ENCODE measurements at regions of chr1 and their contacts with region 1.

Region 1: GRCh38 chr1:231421993-231422764 is at the start of gene EGLN1:
- DNase-seq: peak; percentile 86 to 89
- ATAC-seq: peak; percentile 83 to 97 (median 90)
- H3K4me3 ChIP-seq: peak within 1 kb of the TSS; percentile 58 to 89 (median 76)
- H3K27ac ChIP-seq: peak within 1 kb of the TSS; percentile 96 to 100 (median 98)
- H3K4me1 ChIP-seq: peaks cover 6 to 60% (median 49%) of the 10 kb centered on the region in 9 donors
- H3K27me3 ChIP-seq: no peaks in the 10 kb centered on the region
- CTCF ChIP-seq: peak in 6 of 9 donors; percentile 16 to 60 (median 43)
- total RNA-seq, gene EGLN1: 62.0 to 104 (median 71.2) TPM

Region 2: GRCh38 chr1:231364192-231364591 is 58.0 kb before region 1 on chr1:
- intact Hi-C with region 1: loop called in 7 of 10 experiments (anchors 2 to 5 kb)
- DNase-seq: no peak
- ATAC-seq: no peak
- H3K4me3 ChIP-seq: no peak overlapping the region
- H3K27ac ChIP-seq: peak overlapping the region in 3 of 10 donors; percentile 4 to 29 (median 15)
- H3K4me1 ChIP-seq: peaks cover 0 to 41% (median 14%) of the 10 kb centered on the region in 9 donors
- H3K27me3 ChIP-seq: no peaks in the 10 kb centered on the region
- CTCF ChIP-seq: no peak

Region 3: GRCh38 chr1:231376875-231377549 is 45.2 kb before region 1 on chr1:
- intact Hi-C with region 1: loop called in 2 of 10 experiments (anchors 5 kb)
- DNase-seq: no peak
- ATAC-seq: peak in 3 of 8 donors; percentile 15 to 45 (median 35)
- H3K4me3 ChIP-seq: no peak overlapping the region
- H3K27ac ChIP-seq: peak overlapping the region in 3 of 10 donors; percentile 22 to 61 (median 28)
- H3K4me1 ChIP-seq: peaks cover 8 to 68% (median 55%) of the 10 kb centered on the region in 9 donors
- H3K27me3 ChIP-seq: no peaks in the 10 kb centered on the region
- CTCF ChIP-seq: no peak

Region 4: GRCh38 chr1:231442735-231443134 is 20.6 kb after region 1 on chr1:
- intact Hi-C with region 1: no loop called
- DNase-seq: no peak
- ATAC-seq: no peak
- H3K4me3 ChIP-seq: no peak overlapping the region
- H3K27ac ChIP-seq: no peak overlapping the region
- H3K4me1 ChIP-seq: no peaks in the 10 kb centered on the region
- H3K27me3 ChIP-seq: peaks cover 0 to 45% (median 0%) of the 10 kb centered on the region in 7 donors
- CTCF ChIP-seq: no peak

Region 5: DNA sequence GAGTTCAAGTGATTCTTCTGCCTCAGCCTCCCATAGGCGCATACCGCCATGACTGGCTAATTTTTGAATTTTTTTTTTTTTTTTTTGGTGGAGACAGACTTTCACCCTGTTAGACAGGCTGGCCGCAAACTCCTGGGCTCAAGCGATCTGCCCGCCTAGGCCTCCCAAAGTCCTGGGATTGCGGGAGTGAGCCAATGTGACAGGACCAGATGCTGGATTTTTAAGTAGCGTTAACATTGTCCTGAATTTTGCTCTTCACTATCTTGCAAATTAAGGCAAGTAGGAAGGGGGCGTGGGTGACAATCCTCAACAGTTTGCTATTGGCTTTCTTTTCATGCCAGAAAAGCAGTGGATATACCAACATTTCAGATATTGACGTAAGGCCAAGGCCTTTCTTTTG is 56.6 kb after region 1 on chr1:
- intact Hi-C with region 1: no loop called
- DNase-seq: no peak
- ATAC-seq: no peak
- H3K4me3 ChIP-seq: no peak overlapping the region
- H3K27ac ChIP-seq: no peak overlapping the region
- H3K4me1 ChIP-seq: no peaks in the 10 kb centered on the region
- H3K27me3 ChIP-seq: no peaks in the 10 kb centered on the region
- CTCF ChIP-seq: no peak

Region 6: DNA sequence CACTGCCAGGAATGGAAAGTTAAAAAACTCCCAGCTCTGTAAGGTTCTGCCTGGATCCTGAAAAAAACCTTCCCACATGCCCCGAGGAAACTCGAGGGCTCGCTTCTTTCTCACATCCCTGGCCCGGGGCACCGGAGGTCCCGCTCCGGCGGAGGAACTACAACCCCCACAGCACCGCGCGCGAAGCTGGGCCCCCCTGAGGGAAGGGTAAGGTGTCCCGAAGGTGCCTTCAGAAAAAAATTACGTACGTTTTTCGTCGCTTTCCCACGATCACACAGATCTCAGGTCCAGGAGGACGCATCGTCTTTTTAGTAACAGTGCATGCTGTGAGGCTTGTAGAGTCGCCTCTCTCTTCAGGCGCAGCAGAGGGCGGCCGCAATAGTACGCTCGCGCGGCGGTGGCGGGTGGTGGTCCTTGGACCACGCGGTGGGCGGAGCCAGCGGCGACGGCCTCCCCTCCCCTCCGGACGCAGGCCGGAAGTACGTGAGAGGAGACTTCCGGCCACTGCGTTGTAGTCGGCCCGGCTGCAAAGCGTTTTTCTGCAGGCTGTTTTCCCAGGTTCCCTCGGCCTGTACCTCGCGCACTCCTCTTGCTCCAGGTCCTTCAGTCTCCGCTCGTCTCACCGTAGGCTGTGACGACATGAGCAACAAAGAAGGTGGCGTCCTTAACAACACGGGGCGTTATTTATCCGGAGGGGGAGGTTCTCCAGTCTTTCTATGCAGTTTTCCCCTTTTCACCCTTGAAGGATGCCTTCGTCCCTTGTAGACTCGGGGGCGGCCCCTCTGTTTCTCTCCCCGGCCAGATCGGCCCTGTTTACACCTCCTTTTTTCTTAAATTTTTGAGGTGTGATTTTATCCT is 106.2 kb after region 1 on chr1 and contains the start of gene TSNAX:
- intact Hi-C with region 1: loop called in 8 of 10 experiments (anchors 1 to 10 kb)
- DNase-seq: peak; percentile 91 to 92
- ATAC-seq: peak; percentile 99
- H3K4me3 ChIP-seq: peak within 1 kb of the TSS; percentile 59 to 85 (median 74)
- H3K27ac ChIP-seq: peak within 1 kb of the TSS; percentile 87 to 97 (median 92)
- H3K4me1 ChIP-seq: peaks cover 2 to 63% (median 42%) of the 10 kb centered on the region in 9 donors
- H3K27me3 ChIP-seq: no peaks in the 10 kb centered on the region
- CTCF ChIP-seq: no peak
- total RNA-seq, gene TSNAX: 26.2 to 37.9 (median 33.2) TPM

Region 7: DNA sequence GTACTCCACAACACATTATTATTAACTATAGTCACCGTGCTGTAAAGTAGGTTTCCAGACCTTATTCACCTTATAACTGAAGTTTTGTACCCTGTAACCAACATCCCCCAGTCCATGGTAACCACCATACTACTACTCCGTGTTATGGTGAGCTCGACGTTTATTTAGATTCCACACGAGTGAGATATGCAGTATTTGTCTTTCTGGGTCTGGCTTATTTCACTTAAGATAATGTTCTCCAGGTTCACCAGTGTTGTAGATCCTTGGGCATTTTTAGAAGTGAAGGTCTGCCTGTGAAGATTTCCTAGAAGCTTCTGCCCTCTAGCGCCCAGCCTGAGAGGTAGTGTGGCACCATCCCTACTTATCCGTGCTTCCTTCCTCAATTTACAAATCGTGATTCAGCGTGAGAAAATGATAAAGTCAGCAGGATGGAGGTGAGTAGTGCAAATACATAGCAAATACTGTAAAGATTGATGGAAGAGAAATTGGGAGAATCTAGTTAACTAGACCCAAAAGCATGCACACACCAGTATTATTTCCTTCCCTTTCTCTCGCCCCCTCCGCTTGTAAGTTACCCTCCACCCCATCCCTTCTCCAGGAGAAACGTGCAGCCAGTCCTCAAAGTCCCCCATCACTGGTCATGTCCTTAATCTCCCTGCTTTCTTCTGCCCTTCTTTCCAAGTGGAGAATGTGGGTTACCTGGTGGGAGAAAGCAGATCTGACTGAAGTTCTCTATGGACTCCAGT is 168.4 kb after region 1 on chr1:
- intact Hi-C with region 1: loop called in 6 of 10 experiments (anchors 5 to 10 kb)
- DNase-seq: peak; percentile 22 to 49
- ATAC-seq: peak in 7 of 8 donors; percentile 82 to 95 (median 92)
- H3K4me3 ChIP-seq: no peak overlapping the region
- H3K27ac ChIP-seq: peak overlapping the region in 2 of 10 donors; percentile 56 to 67
- H3K4me1 ChIP-seq: peaks cover 0 to 37% (median 8%) of the 10 kb centered on the region in 9 donors
- H3K27me3 ChIP-seq: no peaks in the 10 kb centered on the region
- CTCF ChIP-seq: peak; percentile 65 to 88 (median 80)

Region 8: GRCh38 chr1:231603598-231604275 is 181.6 kb after region 1 on chr1:
- intact Hi-C with region 1: loop called in 3 of 10 experiments (anchors 5 to 10 kb)
- DNase-seq: peak in 1 of 2 donors; percentile 27
- ATAC-seq: peak in 7 of 8 donors; percentile 37 to 68 (median 59)
- H3K4me3 ChIP-seq: peak overlapping the region in 9 of 10 donors; percentile 28 to 58 (median 49)
- H3K27ac ChIP-seq: peak overlapping the region in 9 of 10 donors; percentile 4 to 70 (median 36)
- H3K4me1 ChIP-seq: peaks cover 8 to 48% (median 29%) of the 10 kb centered on the region in 9 donors
- H3K27me3 ChIP-seq: no peaks in the 10 kb centered on the region
- CTCF ChIP-seq: peak; percentile 66 to 86 (median 82)

Region 9: DNA sequence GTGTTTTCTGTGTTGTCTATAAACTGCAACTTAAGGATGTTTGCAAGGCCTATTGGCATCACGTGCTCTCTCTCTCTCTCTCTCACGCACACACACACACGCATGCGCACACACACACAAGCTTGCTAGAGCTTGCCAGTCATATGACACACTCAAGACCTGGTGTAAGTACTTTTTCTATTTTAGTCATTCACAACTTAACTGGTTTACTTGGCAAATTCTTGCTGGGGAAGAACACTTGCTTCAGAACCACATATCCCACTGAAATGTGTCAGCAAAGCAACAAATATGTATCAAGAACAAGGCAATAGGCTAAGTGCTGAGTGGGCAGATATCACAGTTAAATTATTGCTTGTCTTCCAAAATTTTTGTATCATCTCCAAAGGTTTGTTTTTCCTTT is 312.2 kb after region 1 on chr1:
- intact Hi-C with region 1: no loop called
- DNase-seq: peak; percentile 13 to 20
- ATAC-seq: peak in 4 of 8 donors; percentile 7 to 52 (median 26)
- H3K4me3 ChIP-seq: no peak overlapping the region
- H3K27ac ChIP-seq: no peak overlapping the region
- H3K4me1 ChIP-seq: peaks cover 0 to 6% (median 0%) of the 10 kb centered on the region in 9 donors
- H3K27me3 ChIP-seq: no peaks in the 10 kb centered on the region
- CTCF ChIP-seq: no peak